ENCODE measurements at regions of chr9 and their contacts with region 1.

Region 1: DNA sequence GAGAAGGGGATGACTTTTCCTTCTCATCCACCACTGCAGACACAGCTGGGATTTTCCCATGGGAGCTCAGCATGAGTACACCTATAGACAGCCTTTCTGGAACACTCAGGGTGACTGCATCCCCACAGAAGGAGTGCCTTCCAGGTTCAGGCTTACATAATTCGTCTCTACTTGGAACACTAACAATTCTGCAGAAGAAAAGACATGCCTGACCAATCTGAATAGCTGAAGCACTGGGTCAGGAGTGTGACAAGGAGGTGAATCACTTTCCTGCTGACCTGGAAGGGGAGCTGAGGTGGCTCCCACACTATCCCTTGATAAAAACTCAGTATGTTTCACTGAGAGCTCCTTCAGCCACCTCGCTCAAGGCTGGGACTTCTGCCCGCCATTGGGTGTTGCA is 425.3 kb downstream of the TLR4 start:
- DNase-seq: no peak
- ATAC-seq: no peak
- H3K4me3 ChIP-seq: no peak overlapping the region
- H3K27ac ChIP-seq: no peak overlapping the region
- H3K4me1 ChIP-seq: no peaks in the 10 kb centered on the region
- H3K27me3 ChIP-seq: no peaks in the 10 kb centered on the region
- CTCF ChIP-seq: no peak

Region 2: GRCh38 chr9:120014799-120015198 is 1885.3 kb after region 1 on chr9:
- intact Hi-C with region 1: loop called in 1 of 10 experiments (anchors 10 kb)
- DNase-seq: no peak
- ATAC-seq: no peak
- H3K4me3 ChIP-seq: no peak overlapping the region
- H3K27ac ChIP-seq: no peak overlapping the region
- H3K4me1 ChIP-seq: no peaks in the 10 kb centered on the region
- H3K27me3 ChIP-seq: peaks cover 0 to 18% (median 7%) of the 10 kb centered on the region in 7 donors
- CTCF ChIP-seq: no peak